Activated naive CD4-positive, alpha-beta T cell treated with anti-CD3 and anti-CD28 coated beads, Interleukin-2, amount 10 ng/mL, durations not matched to agents 7 days and 5 days (primary cell): ENCODE measurements at regions of chr11 and their contacts with region 1.

Region 1: GRCh38 chr11:36395978-36396736 is 100.1 kb downstream of the PRR5L start:
- DNase-seq: no peak
- H3K4me3 Mint-ChIP-seq: no peak overlapping the region
- H3K27ac Mint-ChIP-seq: no peak overlapping the region
- H3K4me1 Mint-ChIP-seq: peaks cover 42% of the 10 kb centered on the region
- H3K27me3 Mint-ChIP-seq: peaks cover 8% of the 10 kb centered on the region

Region 2: DNA sequence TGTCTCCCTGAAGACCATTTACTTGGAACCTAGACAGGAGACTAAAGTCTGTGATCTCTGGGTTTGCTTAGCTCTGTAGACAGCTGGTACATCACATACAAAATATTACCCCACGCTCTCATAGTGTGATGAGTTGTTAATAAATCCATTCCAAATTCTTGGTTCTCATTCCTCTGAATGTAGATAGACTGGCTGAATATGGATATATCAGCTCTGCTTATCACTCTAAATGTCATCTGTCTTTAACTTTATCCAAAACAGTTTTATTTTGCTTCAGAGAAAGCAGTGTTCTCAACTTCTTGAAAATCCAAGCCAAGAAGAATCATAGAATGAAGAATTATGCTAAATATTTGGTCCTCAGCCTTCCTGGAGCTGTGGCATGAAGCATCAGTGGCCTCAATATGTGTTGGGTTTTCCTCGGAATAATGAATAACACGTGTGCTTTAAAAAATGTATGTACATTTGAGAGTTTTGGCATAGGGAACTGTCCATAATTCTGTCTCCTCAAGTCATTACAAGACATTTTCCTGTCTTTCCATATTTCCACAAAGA is 462.8 kb before region 1 on chr11:
- CTCF ChIA-PET with region 1: no interaction called
- DNase-seq: no peak
- H3K4me3 Mint-ChIP-seq: no peak overlapping the region
- H3K27ac Mint-ChIP-seq: no peak overlapping the region
- H3K4me1 Mint-ChIP-seq: no peaks in the 10 kb centered on the region
- H3K27me3 Mint-ChIP-seq: peaks cover 10% of the 10 kb centered on the region

Region 3: DNA sequence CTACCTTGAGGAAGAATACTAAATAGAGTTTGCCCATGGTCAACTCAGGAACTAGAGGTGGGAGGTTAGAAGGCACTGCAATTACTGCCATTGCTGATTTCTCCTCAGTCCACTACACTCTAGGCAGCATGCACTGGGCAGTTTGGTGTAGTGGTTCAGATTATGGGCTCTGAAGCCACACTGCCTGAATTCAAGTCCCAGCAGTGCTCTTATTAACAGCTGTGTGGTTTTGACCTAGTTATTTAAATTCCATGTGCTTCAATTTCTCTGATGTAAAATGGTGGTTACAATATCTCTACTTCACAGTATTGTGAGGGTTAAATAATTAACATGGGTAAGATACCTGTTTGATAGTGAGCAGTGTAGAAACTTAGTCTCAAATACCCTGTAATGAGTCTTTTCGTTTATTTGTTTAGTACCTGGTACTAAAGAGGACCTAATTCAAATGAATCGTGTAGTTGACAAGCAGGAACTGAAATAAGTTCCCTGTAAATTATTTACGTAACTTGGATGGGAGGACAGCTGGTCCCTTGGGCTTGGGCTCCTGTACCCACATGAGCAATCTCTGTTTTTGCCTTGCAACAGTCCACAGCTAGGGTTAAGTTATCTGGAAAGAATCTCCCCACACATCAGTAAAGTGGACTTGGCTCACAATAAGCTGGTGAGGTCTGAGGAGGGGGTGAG is 82.3 kb before region 1 on chr11:
- CTCF ChIA-PET with region 1: no interaction called
- DNase-seq: no peak
- H3K4me3 Mint-ChIP-seq: no peak overlapping the region
- H3K27ac Mint-ChIP-seq: no peak overlapping the region
- H3K4me1 Mint-ChIP-seq: no peaks in the 10 kb centered on the region
- H3K27me3 Mint-ChIP-seq: peaks cover 19% of the 10 kb centered on the region

Region 4: GRCh38 chr11:36376888-36377758 is 19.0 kb before region 1 on chr11:
- CTCF ChIA-PET with region 1: interaction called, 10 read pairs
- DNase-seq: peak; percentile 61
- H3K4me3 Mint-ChIP-seq: peak overlapping the region; percentile 82
- H3K27ac Mint-ChIP-seq: peak overlapping the region; percentile 67
- H3K4me1 Mint-ChIP-seq: peaks cover 32% of the 10 kb centered on the region
- H3K27me3 Mint-ChIP-seq: peaks cover 74% of the 10 kb centered on the region